CD4-positive, alpha-beta T cell (primary cell): ENCODE measurements at regions of chr9 and their contacts with region 1.

Region 1: GRCh38 chr9:33623658-33624586 is 99.9 kb downstream of the ANKRD18B start:
- DNase-seq: peak; percentile 44 to 86 (median 59)
- ATAC-seq: peak; percentile 96
- H3K4me3 ChIP-seq: no peak overlapping the region
- H3K4me3 Mint-ChIP-seq: no peak overlapping the region
- H3K27ac ChIP-seq: no peak overlapping the region
- H3K27ac Mint-ChIP-seq: no peak overlapping the region
- H3K4me1 ChIP-seq: peaks cover 6% of the 10 kb centered on the region
- H3K4me1 Mint-ChIP-seq: peaks cover under 1% of the 10 kb centered on the region
- H3K27me3 ChIP-seq: peaks cover under 1 to 3% of the 10 kb centered on the region in 2 experiments
- H3K27me3 Mint-ChIP-seq: peaks cover 41% of the 10 kb centered on the region
- CTCF ChIP-seq: peak; percentile 88

Region 2: GRCh38 chr9:32045513-32045912 is 1578.4 kb before region 1 on chr9:
- CTCF ChIA-PET with region 1: no interaction called
- POLR2A ChIA-PET with region 1: no interaction called
- intact Hi-C with region 1: no loop called
- DNase-seq: no peak
- ATAC-seq: no peak
- H3K4me3 ChIP-seq: no peak overlapping the region
- H3K4me3 Mint-ChIP-seq: no peak overlapping the region
- H3K27ac ChIP-seq: no peak overlapping the region
- H3K27ac Mint-ChIP-seq: no peak overlapping the region
- H3K4me1 ChIP-seq: no peaks in the 10 kb centered on the region
- H3K4me1 Mint-ChIP-seq: no peaks in the 10 kb centered on the region
- H3K27me3 ChIP-seq: no peaks in the 10 kb centered on the region
- H3K27me3 Mint-ChIP-seq: no peaks in the 10 kb centered on the region
- CTCF ChIP-seq: no peak

Region 3: GRCh38 chr9:33404788-33405362 is 219.0 kb before region 1 on chr9:
- CTCF ChIA-PET with region 1: no interaction called
- POLR2A ChIA-PET with region 1: no interaction called
- intact Hi-C with region 1: loop called (anchors 5 kb)
- DNase-seq: peak in 1 of 14 experiments; percentile 11
- ATAC-seq: no peak
- H3K4me3 ChIP-seq: no peak overlapping the region
- H3K4me3 Mint-ChIP-seq: no peak overlapping the region
- H3K27ac ChIP-seq: no peak overlapping the region
- H3K27ac Mint-ChIP-seq: peak overlapping the region; percentile 45
- H3K4me1 ChIP-seq: peaks cover 14% of the 10 kb centered on the region
- H3K4me1 Mint-ChIP-seq: peaks cover 6% of the 10 kb centered on the region
- H3K27me3 ChIP-seq: no peaks in the 10 kb centered on the region
- H3K27me3 Mint-ChIP-seq: no peaks in the 10 kb centered on the region
- CTCF ChIP-seq: no peak

Region 4: GRCh38 chr9:33489066-33489465 is 134.9 kb before region 1 on chr9:
- CTCF ChIA-PET with region 1: no interaction called
- POLR2A ChIA-PET with region 1: no interaction called
- intact Hi-C with region 1: no loop called
- DNase-seq: no peak
- ATAC-seq: no peak
- H3K4me3 ChIP-seq: no peak overlapping the region
- H3K4me3 Mint-ChIP-seq: no peak overlapping the region
- H3K27ac ChIP-seq: no peak overlapping the region
- H3K27ac Mint-ChIP-seq: no peak overlapping the region
- H3K4me1 ChIP-seq: no peaks in the 10 kb centered on the region
- H3K4me1 Mint-ChIP-seq: no peaks in the 10 kb centered on the region
- H3K27me3 ChIP-seq: no peaks in the 10 kb centered on the region
- H3K27me3 Mint-ChIP-seq: peaks cover 6% of the 10 kb centered on the region
- CTCF ChIP-seq: no peak

Region 5: DNA sequence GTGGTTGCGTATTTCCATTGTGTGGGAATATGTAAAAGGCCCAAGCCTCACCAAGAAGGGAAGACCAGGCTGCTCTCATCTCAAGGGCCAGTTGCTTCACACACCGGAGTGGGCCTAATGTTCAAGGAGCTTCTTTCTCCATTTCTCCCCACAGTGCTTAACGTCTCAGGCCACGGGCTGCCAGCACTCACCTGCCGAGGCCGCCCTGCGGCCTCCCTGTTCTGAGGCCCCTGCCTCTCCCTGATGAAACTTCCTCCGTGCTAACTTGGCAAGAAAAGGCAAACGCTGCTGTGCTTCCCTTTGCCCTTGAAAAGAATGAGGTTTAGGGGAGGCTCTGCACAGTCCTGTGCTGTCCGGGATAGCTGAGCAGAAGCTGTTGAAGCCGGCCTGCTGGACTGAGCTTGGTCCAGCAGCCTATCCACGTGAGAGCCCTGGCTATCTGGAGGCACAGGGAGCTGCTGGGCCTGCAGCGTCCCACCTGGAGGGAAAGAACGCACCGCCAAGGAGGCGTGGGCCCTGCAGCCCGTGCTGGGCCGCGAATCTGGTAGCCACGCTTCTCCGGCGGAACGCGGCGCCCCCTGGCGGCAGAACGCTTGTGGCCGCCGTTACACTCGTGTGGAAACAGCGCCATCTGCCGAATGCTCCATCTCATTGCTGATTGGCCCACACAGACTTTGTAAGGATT is 97.9 kb after region 1 on chr9:
- CTCF ChIA-PET with region 1: interaction called, 53 read pairs
- POLR2A ChIA-PET with region 1: interaction called, 16 read pairs
- intact Hi-C with region 1: loop called (anchors 1 kb)
- DNase-seq: peak; percentile 77 to 94 (median 86)
- ATAC-seq: peak; percentile 69
- H3K4me3 ChIP-seq: no peak overlapping the region
- H3K4me3 Mint-ChIP-seq: no peak overlapping the region
- H3K27ac ChIP-seq: no peak overlapping the region
- H3K27ac Mint-ChIP-seq: no peak overlapping the region
- H3K4me1 ChIP-seq: peaks cover 6% of the 10 kb centered on the region
- H3K4me1 Mint-ChIP-seq: no peaks in the 10 kb centered on the region
- H3K27me3 ChIP-seq: no peaks in the 10 kb centered on the region
- H3K27me3 Mint-ChIP-seq: peaks cover 15% of the 10 kb centered on the region
- CTCF ChIP-seq: peak; percentile 100

Region 6: DNA sequence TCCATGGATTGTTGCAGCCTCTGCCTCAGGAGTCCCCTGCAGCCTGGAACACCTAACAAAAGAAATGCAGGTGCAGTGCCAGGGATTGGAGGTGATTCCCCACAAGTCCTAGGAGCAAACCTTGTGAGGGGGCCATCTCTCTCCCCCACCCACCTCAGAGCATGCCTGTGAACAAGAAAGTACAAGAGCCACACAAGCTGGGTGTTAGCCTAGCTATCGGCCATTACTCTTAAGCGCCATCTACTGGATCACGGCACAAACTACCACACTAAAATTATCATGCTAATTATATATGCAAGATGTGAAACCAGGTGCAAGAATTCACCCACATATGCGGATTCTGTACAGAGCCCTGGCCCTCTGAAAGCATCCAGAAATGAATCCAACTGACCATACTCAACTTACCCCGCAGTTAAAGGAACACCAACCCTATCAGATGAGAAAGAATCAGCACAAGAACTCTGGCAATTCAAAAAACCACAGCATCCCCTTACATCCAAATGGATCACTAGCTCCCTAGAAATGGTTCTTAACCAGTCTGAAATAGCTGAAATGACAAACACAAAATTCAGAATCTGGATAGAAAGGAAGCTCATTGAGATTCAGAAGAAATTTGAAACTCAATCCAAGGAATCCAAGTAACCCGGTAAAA is 154.9 kb after region 1 on chr9:
- CTCF ChIA-PET with region 1: interaction called, 3 read pairs
- POLR2A ChIA-PET with region 1: no interaction called
- intact Hi-C with region 1: loop called in 1 of 2 experiments (anchors 5 kb)
- DNase-seq: peak in 12 of 14 experiments; percentile 20 to 78 (median 28)
- ATAC-seq: peak; percentile 89
- H3K4me3 ChIP-seq: no peak overlapping the region
- H3K4me3 Mint-ChIP-seq: no peak overlapping the region
- H3K27ac ChIP-seq: no peak overlapping the region
- H3K27ac Mint-ChIP-seq: no peak overlapping the region
- H3K4me1 ChIP-seq: no peaks in the 10 kb centered on the region
- H3K4me1 Mint-ChIP-seq: peaks cover 11% of the 10 kb centered on the region
- H3K27me3 ChIP-seq: no peaks in the 10 kb centered on the region
- H3K27me3 Mint-ChIP-seq: peaks cover 6% of the 10 kb centered on the region
- CTCF ChIP-seq: peak; percentile 77

Region 7: GRCh38 chr9:33852216-33852826 is 228.4 kb after region 1 on chr9:
- CTCF ChIA-PET with region 1: interaction called, 3 read pairs
- POLR2A ChIA-PET with region 1: no interaction called
- intact Hi-C with region 1: loop called in 1 of 2 experiments (anchors 5 kb)
- DNase-seq: peak; percentile 37 to 80 (median 54)
- ATAC-seq: peak; percentile 72
- H3K4me3 ChIP-seq: no peak overlapping the region
- H3K4me3 Mint-ChIP-seq: no peak overlapping the region
- H3K27ac ChIP-seq: no peak overlapping the region
- H3K27ac Mint-ChIP-seq: no peak overlapping the region
- H3K4me1 ChIP-seq: peaks cover 18% of the 10 kb centered on the region
- H3K4me1 Mint-ChIP-seq: peaks cover 59% of the 10 kb centered on the region
- H3K27me3 ChIP-seq: no peaks in the 10 kb centered on the region
- H3K27me3 Mint-ChIP-seq: no peaks in the 10 kb centered on the region
- CTCF ChIP-seq: peak; percentile 71